Heart right ventricle (tissue), 16 donors: ENCODE measurements at regions of chr5 and their contacts with region 1.

Region 1: DNA sequence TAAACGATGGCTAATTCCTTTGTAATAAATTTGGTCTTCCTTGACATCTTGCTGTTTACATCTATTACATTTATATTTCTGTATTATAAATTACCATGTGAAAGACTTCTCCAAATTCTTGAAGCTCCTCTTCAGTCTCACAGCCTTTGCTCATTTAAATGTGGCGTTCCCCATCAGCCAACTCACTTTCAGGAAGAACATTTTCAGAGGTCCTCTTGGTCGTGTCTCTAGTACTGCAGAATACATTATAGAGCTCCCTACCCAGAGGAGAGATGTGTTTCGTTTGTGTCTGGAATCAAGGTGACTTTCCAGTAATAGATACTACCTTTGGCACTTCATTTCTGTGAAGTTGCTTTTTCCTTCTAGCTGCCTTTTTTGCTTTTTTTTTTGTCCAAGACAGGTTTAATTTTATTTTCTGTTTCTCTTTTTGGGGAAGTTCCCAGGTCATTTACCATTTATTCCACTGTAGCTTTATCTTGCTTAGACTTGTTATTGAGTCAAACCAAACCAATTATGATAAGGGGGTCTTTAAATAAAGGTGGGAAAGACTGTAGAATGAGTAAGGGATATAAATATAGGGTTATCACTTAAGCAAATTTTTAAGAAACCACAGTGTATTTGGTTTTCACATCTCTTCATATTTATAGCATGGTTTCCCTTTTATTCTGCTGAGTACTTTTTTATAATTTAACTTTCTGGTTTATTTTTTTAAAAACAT is 12.8 kb downstream of the UBE2B start:
- DNase-seq: no peak
- ATAC-seq: no peak
- H3K4me3 ChIP-seq: no peak overlapping the region
- H3K27ac ChIP-seq: no peak overlapping the region
- H3K4me1 ChIP-seq: peaks cover 0 to 7% (median 0%) of the 10 kb centered on the region in 9 donors
- H3K27me3 ChIP-seq: no peaks in the 10 kb centered on the region
- CTCF ChIP-seq: no peak

Region 2: DNA sequence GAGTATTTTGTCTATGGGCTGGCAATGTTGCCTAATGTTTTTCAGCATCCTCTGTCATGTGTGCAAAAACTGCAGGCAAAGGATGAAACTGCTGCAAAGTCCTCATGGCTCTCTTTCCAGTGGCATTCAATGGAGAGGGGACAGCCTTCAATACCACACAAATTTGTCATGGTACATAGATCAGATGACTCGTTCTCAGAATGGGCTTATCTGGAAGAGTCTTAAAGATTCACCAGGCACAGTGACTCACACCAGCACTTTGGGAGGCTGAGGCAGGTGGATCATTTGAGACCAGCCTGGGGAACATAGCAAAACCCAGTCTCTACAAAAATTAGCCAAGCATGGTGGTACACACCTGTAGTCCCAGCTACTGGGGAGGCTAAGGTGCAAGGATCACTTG is 22.3 kb after region 1 on chr5:
- intact Hi-C with region 1: loop called in 1 of 10 experiments (anchors 1 kb)
- DNase-seq: no peak
- ATAC-seq: no peak
- H3K4me3 ChIP-seq: no peak overlapping the region
- H3K27ac ChIP-seq: no peak overlapping the region
- H3K4me1 ChIP-seq: peaks cover 3 to 27% (median 23%) of the 10 kb centered on the region in 9 donors
- H3K27me3 ChIP-seq: no peaks in the 10 kb centered on the region
- CTCF ChIP-seq: no peak

Region 3: GRCh38 chr5:134541736-134542376 is 157.7 kb after region 1 on chr5:
- intact Hi-C with region 1: no loop called
- DNase-seq: peak; percentile 59 to 70
- ATAC-seq: peak in 7 of 8 donors; percentile 57 to 78 (median 72)
- H3K4me3 ChIP-seq: no peak overlapping the region
- H3K27ac ChIP-seq: no peak overlapping the region
- H3K4me1 ChIP-seq: peaks cover 0 to 66% (median 49%) of the 10 kb centered on the region in 9 donors
- H3K27me3 ChIP-seq: no peaks in the 10 kb centered on the region
- CTCF ChIP-seq: no peak